MCF 10A (cell line): ENCODE measurements at regions of chr3 and their contacts with region 1.

Region 1: GRCh38 chr3:69324362-69325025 is 61.4 kb downstream of the FRMD4B start:
- DNase-seq: peak; percentile 51
- H3K4me3 Mint-ChIP-seq: no peak overlapping the region
- H3K27ac Mint-ChIP-seq: no peak overlapping the region
- H3K4me1 Mint-ChIP-seq: peaks cover 11% of the 10 kb centered on the region
- H3K27me3 Mint-ChIP-seq: no peaks in the 10 kb centered on the region
- CTCF ChIP-seq: peak; percentile 53

Region 2: DNA sequence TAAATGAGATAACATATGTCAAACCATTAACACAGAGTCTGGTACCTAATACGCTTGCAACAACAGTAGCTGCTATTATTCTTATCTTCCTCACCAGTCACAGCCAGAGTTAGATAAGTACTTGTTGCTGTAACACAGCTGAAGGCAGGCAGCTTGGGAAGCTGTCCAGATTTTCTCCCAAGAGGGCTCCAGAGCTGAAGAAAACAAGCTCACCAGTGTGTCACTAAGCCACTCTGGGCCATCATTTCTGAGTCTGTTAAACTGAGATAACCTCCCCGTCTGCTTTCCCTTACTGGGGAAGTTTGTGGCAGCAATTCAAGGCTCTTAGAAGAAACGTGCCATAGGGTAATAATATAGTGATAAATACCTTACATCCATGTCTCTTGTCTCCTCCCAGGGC is 618.4 kb before region 1 on chr3:
- CTCF ChIA-PET with region 1: no interaction called
- POLR2A ChIA-PET with region 1: no interaction called
- intact Hi-C with region 1: no loop called
- DNase-seq: no peak
- H3K4me3 Mint-ChIP-seq: no peak overlapping the region
- H3K27ac Mint-ChIP-seq: no peak overlapping the region
- H3K4me1 Mint-ChIP-seq: no peaks in the 10 kb centered on the region
- H3K27me3 Mint-ChIP-seq: no peaks in the 10 kb centered on the region
- CTCF ChIP-seq: no peak

Region 3: DNA sequence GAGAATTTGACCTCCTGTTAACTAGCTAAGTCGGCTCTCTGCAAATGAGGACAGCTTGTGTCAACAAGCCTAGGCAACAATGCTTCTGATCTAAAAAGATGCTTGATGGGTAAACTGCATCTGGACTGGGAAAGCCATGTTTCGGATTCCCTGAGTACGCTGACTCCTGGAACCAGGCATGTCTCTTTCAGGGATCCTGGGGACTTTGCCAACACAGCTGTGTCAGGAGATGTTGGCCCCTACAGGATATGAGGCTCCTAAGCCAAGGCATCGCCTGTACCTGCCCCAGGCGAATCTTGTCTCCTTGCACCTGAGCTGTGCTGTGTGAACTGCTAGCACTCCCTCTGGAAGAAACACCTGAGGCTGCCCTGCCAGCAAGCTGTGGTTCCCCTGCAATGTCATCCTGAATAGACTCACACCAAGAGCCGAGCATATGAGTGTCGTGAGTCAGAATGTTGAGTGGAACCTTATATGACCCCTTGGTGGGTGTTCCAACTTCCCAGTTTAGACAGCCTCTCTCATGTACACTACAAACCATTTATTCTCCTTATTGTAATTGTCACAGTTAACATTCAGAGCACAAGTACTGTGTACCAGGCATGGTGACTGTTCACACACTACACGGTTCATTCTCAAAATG is 328.0 kb before region 1 on chr3:
- CTCF ChIA-PET with region 1: no interaction called
- POLR2A ChIA-PET with region 1: no interaction called
- intact Hi-C with region 1: no loop called
- DNase-seq: no peak
- H3K4me3 Mint-ChIP-seq: no peak overlapping the region
- H3K27ac Mint-ChIP-seq: peak overlapping the region; percentile 69
- H3K4me1 Mint-ChIP-seq: no peaks in the 10 kb centered on the region
- H3K27me3 Mint-ChIP-seq: no peaks in the 10 kb centered on the region
- CTCF ChIP-seq: no peak

Region 4: DNA sequence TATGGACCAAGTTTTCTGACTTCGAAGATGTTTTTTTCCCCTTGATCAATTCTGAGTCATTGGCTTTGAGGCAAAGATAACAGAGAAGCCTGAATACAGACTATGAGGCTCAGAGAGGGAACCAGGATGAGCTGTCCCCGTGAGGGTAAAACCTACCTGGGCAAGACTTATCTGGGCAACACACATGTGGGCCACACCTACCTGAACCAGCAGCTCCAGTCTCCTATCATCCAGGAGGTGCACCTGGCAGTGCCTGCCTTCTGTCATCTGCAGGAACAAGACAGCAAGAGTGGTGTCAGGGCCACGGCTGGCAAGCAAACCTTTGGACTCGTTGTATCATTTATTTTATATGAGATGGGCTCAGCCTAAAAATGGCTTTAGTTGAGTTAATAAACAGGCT is 11.2 kb before region 1 on chr3:
- CTCF ChIA-PET with region 1: interaction called, 44 read pairs
- POLR2A ChIA-PET with region 1: interaction called, 4 read pairs
- intact Hi-C with region 1: no loop called
- DNase-seq: no peak
- H3K4me3 Mint-ChIP-seq: no peak overlapping the region
- H3K27ac Mint-ChIP-seq: no peak overlapping the region
- H3K4me1 Mint-ChIP-seq: peaks cover under 1% of the 10 kb centered on the region
- H3K27me3 Mint-ChIP-seq: no peaks in the 10 kb centered on the region
- CTCF ChIP-seq: no peak

Region 5: DNA sequence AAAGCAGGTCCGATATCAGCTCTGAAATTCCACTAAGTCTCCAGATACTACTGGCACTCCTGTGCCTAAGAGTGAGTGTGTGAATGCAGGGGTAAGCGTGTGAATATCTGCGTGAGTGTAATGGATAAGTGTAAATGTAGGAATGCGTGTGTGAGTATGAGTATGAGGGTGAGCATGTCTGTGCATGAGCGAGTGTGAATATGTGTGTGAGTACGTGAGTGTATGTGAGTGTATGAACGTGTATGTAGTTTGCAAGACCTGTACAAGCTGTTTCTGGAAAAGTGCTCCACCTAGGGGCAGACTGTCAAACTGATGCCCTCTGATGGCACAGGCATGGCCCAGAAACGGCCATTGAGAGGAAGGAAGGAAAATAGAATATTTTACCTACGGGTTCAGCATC is 85.8 kb after region 1 on chr3:
- CTCF ChIA-PET with region 1: interaction called, 38 read pairs
- POLR2A ChIA-PET with region 1: no interaction called
- intact Hi-C with region 1: loop called (anchors 1 kb)
- DNase-seq: peak; percentile 81
- H3K4me3 Mint-ChIP-seq: no peak overlapping the region
- H3K27ac Mint-ChIP-seq: no peak overlapping the region
- H3K4me1 Mint-ChIP-seq: peaks cover 13% of the 10 kb centered on the region
- H3K27me3 Mint-ChIP-seq: no peaks in the 10 kb centered on the region
- CTCF ChIP-seq: peak; percentile 66

Region 6: GRCh38 chr3:69425261-69425660 is 100.8 kb after region 1 on chr3:
- CTCF ChIA-PET with region 1: interaction called, 48 read pairs
- POLR2A ChIA-PET with region 1: no interaction called
- intact Hi-C with region 1: loop called (anchors 1 kb)
- DNase-seq: peak; percentile 62
- H3K4me3 Mint-ChIP-seq: no peak overlapping the region
- H3K27ac Mint-ChIP-seq: no peak overlapping the region
- H3K4me1 Mint-ChIP-seq: peaks cover 18% of the 10 kb centered on the region
- H3K27me3 Mint-ChIP-seq: no peaks in the 10 kb centered on the region
- CTCF ChIP-seq: peak; percentile 74

Region 7: GRCh38 chr3:69439643-69440270 is 115.3 kb after region 1 on chr3:
- CTCF ChIA-PET with region 1: interaction called, 11 read pairs
- POLR2A ChIA-PET with region 1: no interaction called
- intact Hi-C with region 1: no loop called
- DNase-seq: peak; percentile 35
- H3K4me3 Mint-ChIP-seq: no peak overlapping the region
- H3K27ac Mint-ChIP-seq: no peak overlapping the region
- H3K4me1 Mint-ChIP-seq: peaks cover 10% of the 10 kb centered on the region
- H3K27me3 Mint-ChIP-seq: no peaks in the 10 kb centered on the region
- CTCF ChIP-seq: peak; percentile 43